Mammary epithelial cell (primary cell): ENCODE measurements at regions of chr1 and their contacts with region 1.

Region 1: GRCh38 chr1:43184995-43185394 is 12.9 kb downstream of the CFAP57 start:
- DNase-seq: no peak
- H3K4me3 ChIP-seq: no peak overlapping the region
- H3K27ac ChIP-seq: no peak overlapping the region
- H3K4me1 ChIP-seq: no peaks in the 10 kb centered on the region
- H3K27me3 ChIP-seq: no peaks in the 10 kb centered on the region
- CTCF ChIP-seq: no peak

Region 2: DNA sequence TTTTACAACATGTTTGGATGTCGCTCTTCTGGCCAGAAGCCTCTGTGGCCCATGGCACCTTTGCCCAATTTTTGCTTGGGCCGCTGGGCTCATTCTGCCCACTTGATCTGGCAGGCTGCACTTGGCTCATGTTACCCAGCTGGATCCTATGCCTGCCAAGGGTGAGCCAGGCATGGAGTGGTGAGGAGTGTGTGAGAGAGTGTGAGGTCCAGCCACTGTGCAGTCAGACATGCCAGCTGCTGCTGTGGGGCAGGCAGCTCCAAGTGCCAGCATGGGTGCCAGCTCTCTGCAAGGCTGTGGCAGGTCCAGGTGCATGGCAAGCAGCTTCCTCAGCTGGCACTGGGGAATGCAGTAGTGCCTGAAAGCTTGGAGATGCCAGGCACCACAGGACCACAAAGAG is 83.9 kb before region 1 on chr1:
- CTCF ChIA-PET with region 1: no interaction called
- dilution Hi-C with region 1: loop called (anchors 5 kb)
- in situ Hi-C with region 1: no loop called
- intact Hi-C with region 1: no loop called
- DNase-seq: no peak
- H3K4me3 ChIP-seq: no peak overlapping the region
- H3K27ac ChIP-seq: no peak overlapping the region
- H3K4me1 ChIP-seq: no peaks in the 10 kb centered on the region
- H3K27me3 ChIP-seq: no peaks in the 10 kb centered on the region
- CTCF ChIP-seq: no peak

Region 3: DNA sequence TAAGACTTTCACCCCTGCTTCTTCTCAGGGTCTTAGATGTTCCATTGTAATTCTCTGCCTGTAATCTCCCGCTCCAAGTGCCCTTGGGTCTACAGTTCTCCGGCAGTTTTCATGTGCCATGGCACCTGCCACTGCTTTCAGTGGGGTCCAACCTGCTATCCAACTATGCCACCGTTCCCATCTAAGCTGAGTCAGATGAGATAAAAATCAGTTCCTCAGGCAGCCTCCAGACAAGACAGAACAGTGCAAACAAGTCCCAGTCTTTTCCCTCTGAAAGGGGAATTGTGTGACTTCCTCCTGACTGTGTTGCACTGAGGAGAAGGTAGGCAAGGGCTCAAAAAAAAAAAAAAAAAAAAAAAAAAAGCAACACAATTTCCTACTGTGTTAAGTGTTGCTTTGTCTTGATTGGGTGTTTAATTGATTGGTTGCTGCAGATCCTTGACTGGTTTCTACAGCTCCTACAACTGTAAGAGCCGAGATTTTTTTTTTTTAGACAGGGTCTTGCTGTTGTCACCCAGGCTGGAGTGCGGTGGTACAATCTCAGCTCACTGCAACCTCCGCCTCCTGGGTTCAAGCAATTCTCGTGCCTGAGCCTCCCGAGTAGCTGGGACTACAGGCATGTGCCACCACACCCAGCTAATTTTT is 63.6 kb before region 1 on chr1:
- CTCF ChIA-PET with region 1: no interaction called
- dilution Hi-C with region 1: no loop called
- in situ Hi-C with region 1: loop called in 1 of 2 experiments (anchors 10 kb)
- intact Hi-C with region 1: no loop called
- DNase-seq: peak; percentile 70
- H3K4me3 ChIP-seq: peak overlapping the region; percentile 46 to 50 (median 50)
- H3K27ac ChIP-seq: peak overlapping the region; percentile 72
- H3K4me1 ChIP-seq: peaks cover 13% of the 10 kb centered on the region
- H3K27me3 ChIP-seq: no peaks in the 10 kb centered on the region
- CTCF ChIP-seq: no peak

Region 4: GRCh38 chr1:43143441-43143888 is 41.5 kb before region 1 on chr1:
- CTCF ChIA-PET with region 1: no interaction called
- dilution Hi-C with region 1: no loop called
- in situ Hi-C with region 1: no loop called
- intact Hi-C with region 1: no loop called
- DNase-seq: peak; percentile 11
- H3K4me3 ChIP-seq: no peak overlapping the region
- H3K27ac ChIP-seq: no peak overlapping the region
- H3K4me1 ChIP-seq: peaks cover 19% of the 10 kb centered on the region
- H3K27me3 ChIP-seq: no peaks in the 10 kb centered on the region
- CTCF ChIP-seq: peak in 1 of 2 donors; percentile 37

Region 5: GRCh38 chr1:43814401-43814800 is 629.4 kb after region 1 on chr1:
- CTCF ChIA-PET with region 1: no interaction called
- dilution Hi-C with region 1: no loop called
- in situ Hi-C with region 1: no loop called
- intact Hi-C with region 1: no loop called
- DNase-seq: no peak
- H3K4me3 ChIP-seq: no peak overlapping the region
- H3K27ac ChIP-seq: no peak overlapping the region
- H3K4me1 ChIP-seq: no peaks in the 10 kb centered on the region
- H3K27me3 ChIP-seq: no peaks in the 10 kb centered on the region
- CTCF ChIP-seq: no peak